ENCODE measurements at regions of chr9 and their contacts with region 1.

Region 1: GRCh38 chr9:5773324-5773999 is 59.5 kb downstream of the ERMP1 start:
- DNase-seq: no peak
- H3K4me3 ChIP-seq: no peak overlapping the region
- H3K27ac ChIP-seq: no peak overlapping the region
- H3K4me1 ChIP-seq: no peaks in the 10 kb centered on the region
- CTCF ChIP-seq: peak; percentile 68

Region 2: GRCh38 chr9:5450359-5451091 is 322.9 kb before region 1 on chr9 and contains the start of gene CD274:
- CTCF ChIA-PET with region 1: no interaction called
- POLR2A ChIA-PET with region 1: no interaction called
- intact Hi-C with region 1: loop called (anchors 10 kb)
- DNase-seq: peak; percentile 74
- H3K4me3 ChIP-seq: peak within 1 kb of the TSS; percentile 71
- H3K27ac ChIP-seq: no peak within 1 kb of the TSS
- H3K4me1 ChIP-seq: peaks cover 25% of the 10 kb centered on the region
- CTCF ChIP-seq: peak; percentile 81
- total RNA-seq, gene CD274: 0.57 and 4.3 TPM in 2 replicates